Endothelial cell of umbilical vein (primary cell): ENCODE measurements at regions of chr11 and their contacts with region 1.

Region 1: GRCh38 chr11:70367071-70367470 is 31.3 kb upstream of the CTTN start:
- DNase-seq: peak; percentile 60
- H3K4me3 ChIP-seq: no peak overlapping the region
- H3K27ac ChIP-seq: no peak overlapping the region
- H3K4me1 ChIP-seq: peaks cover 13% of the 10 kb centered on the region
- H3K27me3 ChIP-seq: no peaks in the 10 kb centered on the region
- CTCF ChIP-seq: no peak
- POLR2A ChIP-seq: no peak

Region 2: DNA sequence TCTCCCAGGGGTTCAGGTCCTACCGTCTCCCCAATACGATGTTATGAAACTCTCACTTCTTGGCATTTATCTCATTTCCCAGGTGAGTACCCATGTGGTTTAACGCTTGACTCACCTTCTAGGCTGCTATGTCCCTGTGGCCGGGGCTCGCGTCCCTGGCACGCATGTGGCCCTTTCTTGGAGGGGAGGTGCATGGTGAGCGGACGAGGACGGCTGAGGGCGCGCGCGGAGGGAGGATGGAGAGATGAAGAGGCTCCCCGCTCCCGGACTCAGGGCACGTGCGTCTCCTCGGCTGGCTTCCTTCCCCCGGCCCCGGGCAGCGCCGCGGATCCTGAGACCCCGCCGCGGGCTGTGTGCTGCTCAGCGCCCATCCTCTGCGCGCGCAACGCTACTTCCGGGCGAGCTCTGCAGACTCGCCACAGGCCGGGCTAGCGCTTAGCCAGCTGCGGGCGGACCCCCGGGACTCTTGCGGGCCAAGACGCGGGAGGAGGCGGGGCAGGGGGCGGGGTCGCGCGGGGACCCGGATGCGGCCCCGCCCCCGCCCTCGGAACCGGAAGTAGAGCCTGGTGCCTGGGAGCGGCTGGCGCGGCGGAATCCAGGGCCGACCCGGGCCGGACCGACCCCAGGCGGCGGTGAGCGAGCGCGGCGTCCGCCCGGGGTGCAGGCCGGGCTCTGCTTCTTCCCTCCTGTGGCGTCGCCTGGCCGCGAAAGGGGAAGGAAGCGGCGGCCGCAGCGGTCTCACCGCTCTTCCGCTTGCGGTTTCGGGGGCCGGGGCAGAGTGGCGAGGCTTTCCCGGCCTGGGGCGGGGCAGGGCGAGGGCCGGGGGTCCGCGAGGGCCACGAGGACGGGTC is 31.1 kb after region 1 on chr11 and contains the start of gene CTTN:
- CTCF ChIA-PET with region 1: interaction called, 3 read pairs
- POLR2A ChIA-PET with region 1: interaction called, 3 read pairs
- dilution Hi-C with region 1: no loop called
- intact Hi-C with region 1: loop called (anchors 1 kb)
- DNase-seq: peak; percentile 87
- H3K4me3 ChIP-seq: peak within 1 kb of the TSS; percentile 84 to 89 (median 85)
- H3K27ac ChIP-seq: peak within 1 kb of the TSS; percentile 60
- H3K4me1 ChIP-seq: peaks cover 19% of the 10 kb centered on the region
- H3K27me3 ChIP-seq: no peaks in the 10 kb centered on the region
- CTCF ChIP-seq: no peak
- POLR2A ChIP-seq: peak; percentile 69
- total RNA-seq, gene CTTN: 307 and 330 TPM in 2 replicates

Region 3: DNA sequence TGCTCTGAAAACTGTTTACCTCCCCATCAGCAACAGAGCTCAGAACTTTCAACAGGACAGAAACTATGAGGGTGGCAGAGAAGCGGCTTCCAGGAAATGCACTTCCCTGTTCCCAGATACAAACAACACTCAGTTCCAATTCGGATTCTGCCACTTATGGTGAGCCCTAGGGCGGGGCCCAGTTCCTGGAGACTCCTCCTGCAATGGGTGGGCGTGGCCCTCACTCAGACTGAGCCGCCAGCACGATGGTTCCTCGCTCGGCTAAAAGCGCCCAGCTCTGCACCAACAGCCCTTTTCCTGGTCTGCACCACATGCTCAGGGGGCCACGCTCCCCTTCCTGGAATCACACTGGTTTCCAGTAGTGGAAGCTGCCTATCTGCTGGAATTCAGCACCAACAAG is 345.4 kb after region 1 on chr11:
- CTCF ChIA-PET with region 1: no interaction called
- POLR2A ChIA-PET with region 1: no interaction called
- dilution Hi-C with region 1: no loop called
- intact Hi-C with region 1: no loop called
- DNase-seq: no peak
- H3K4me3 ChIP-seq: no peak overlapping the region
- H3K27ac ChIP-seq: no peak overlapping the region
- H3K4me1 ChIP-seq: no peaks in the 10 kb centered on the region
- H3K27me3 ChIP-seq: no peaks in the 10 kb centered on the region
- CTCF ChIP-seq: no peak
- POLR2A ChIP-seq: no peak